ENCODE measurements at regions of chr15 and their contacts with region 1.

Region 1: GRCh38 chr15:64731012-64731806 is 44.2 kb downstream of the RBPMS2 start:
- DNase-seq: peak; percentile 83
- H3K4me3 ChIP-seq: no peak overlapping the region
- H3K27ac ChIP-seq: no peak overlapping the region
- H3K4me1 ChIP-seq: peaks cover 6% of the 10 kb centered on the region
- H3K27me3 ChIP-seq: no peaks in the 10 kb centered on the region
- CTCF ChIP-seq: peak; percentile 94

Region 2: DNA sequence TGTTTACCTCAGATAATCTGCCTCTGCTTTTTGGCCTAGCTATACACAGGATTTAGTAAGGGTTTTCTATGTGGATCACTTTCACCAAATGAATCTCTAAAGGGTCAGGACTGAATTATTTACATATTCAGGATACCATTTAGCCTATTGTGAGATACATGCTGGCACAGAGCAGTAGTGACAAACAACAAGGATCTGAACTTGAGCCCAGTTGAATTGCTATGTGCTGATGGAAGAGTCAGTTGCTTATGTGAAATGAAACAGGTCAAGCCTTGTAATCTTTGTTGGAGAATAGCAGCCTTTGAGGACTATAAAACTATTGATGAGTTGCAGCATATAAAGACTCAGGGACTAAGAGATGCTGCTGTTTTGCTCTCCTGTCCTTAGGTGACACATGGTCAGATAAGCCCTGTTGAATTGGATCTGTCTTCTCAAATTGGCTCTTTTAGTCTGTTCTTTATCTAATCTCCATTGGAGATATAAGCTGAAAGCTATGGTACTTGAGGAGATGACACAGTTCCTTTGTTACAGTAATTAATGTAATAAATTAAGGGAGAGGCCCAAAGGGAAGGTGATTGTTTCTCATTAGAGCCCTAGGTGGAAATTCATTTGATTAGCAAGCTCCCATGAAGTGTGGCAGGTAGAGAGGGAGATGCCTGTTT is 240.5 kb before region 1 on chr15:
- intact Hi-C with region 1: no loop called
- DNase-seq: no peak
- H3K4me3 ChIP-seq: no peak overlapping the region
- H3K27ac ChIP-seq: no peak overlapping the region
- H3K4me1 ChIP-seq: peaks cover 9% of the 10 kb centered on the region
- H3K27me3 ChIP-seq: no peaks in the 10 kb centered on the region
- CTCF ChIP-seq: no peak

Region 3: GRCh38 chr15:64685230-64685888 is 45.9 kb before region 1 on chr15:
- intact Hi-C with region 1: loop called (anchors 2 kb)
- DNase-seq: no peak
- H3K4me3 ChIP-seq: no peak overlapping the region
- H3K27ac ChIP-seq: peak overlapping the region; percentile 3
- H3K4me1 ChIP-seq: peaks cover 69% of the 10 kb centered on the region
- H3K27me3 ChIP-seq: no peaks in the 10 kb centered on the region
- CTCF ChIP-seq: no peak

Region 4: DNA sequence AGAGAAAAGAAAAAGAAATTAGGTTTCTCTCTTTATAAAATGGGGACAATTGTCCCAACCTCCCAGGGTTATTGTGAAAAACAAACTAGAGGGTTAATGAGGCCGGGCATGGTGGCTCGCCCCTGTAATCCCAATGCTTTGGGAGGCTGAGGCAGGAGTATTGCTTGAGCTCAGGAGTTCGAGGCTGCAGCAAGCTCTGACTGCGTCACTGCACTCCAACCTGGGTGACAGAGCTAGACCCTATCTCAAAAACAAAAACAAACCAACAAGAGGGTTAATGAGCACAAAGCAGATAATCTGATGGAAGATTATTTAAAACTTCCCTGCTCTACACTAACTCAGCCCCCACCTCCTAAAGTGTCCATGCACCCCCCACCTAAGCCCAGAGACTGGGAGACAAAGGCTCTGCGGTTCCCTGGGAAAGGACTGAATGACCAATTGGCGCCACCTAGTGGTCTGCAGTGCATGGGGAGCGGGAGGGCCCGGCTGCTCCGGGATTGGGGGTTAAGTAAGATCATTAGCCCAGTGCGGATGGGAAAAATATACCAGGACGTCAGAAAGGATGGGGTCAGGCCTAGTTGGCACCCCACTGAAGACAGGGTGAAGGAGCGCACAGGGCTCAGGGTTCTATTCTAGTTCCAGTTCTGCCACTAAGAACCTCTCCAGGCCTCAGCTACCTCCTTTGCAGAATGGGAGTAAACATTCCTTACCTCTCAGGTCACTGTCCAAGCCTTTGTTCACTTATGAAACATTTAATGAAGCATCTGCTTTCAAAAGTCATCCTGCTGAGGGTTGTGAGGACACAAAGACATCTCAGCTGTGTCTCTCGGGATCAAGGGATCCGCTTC is 78.7 kb after region 1 on chr15:
- intact Hi-C with region 1: loop called (anchors 5 kb)
- DNase-seq: peak; percentile 83
- H3K4me3 ChIP-seq: no peak overlapping the region
- H3K27ac ChIP-seq: no peak overlapping the region
- H3K4me1 ChIP-seq: peaks cover 22% of the 10 kb centered on the region
- H3K27me3 ChIP-seq: peaks cover 21% of the 10 kb centered on the region
- CTCF ChIP-seq: peak; percentile 92

Region 5: DNA sequence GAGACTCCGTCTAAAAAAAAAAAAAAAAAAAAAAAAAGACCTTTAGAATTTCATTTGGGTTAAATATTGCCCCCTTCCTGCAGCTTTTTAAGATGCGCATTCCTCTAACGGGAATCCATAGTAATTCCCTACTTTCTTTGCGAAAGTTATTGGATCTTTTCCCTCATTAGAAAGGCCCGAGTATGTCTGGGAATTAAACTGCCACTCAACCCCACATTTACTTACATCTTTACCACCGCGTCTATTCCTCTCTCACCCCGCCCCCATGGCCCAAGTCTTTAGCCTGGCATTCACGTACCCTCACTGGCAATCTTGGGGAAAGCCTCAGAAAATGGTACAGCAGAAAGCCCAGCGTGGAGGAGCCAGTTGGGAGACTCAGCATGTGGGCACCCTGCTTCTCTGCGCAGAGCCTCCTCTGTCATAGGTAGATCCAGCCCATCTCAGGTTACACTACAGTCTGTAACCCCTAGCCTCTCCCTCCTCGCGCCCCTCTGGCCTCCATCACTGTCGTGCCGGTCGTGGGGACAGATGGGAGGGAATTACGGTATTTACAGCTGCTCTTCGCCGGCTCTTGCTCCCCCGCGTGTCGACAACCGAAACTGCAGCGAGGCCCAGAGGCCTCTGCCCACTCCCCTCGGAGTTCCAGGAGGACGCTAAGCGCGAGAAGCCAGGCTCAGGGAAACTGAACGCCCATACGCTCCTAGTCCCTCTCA is 174.1 kb after region 1 on chr15:
- intact Hi-C with region 1: loop called (anchors 5 kb)
- DNase-seq: peak; percentile 84
- H3K4me3 ChIP-seq: peak overlapping the region; percentile 55
- H3K27ac ChIP-seq: no peak overlapping the region
- H3K4me1 ChIP-seq: peaks cover 4% of the 10 kb centered on the region
- H3K27me3 ChIP-seq: peaks cover 11% of the 10 kb centered on the region
- CTCF ChIP-seq: peak; percentile 98

Measured in left ventricle myocardium inferior (tissue), 1 donor.